Right cardiac atrium (tissue), 5 donors: ENCODE measurements at regions of chr11 and their contacts with region 1.

Region 1: GRCh38 chr11:10735481-10736475 is 15.3 kb upstream of the CTR9 start:
- DNase-seq: peak; percentile 95 to 98 (median 98)
- ATAC-seq: peak; percentile 99
- H3K4me3 ChIP-seq: no peak overlapping the region
- H3K27ac ChIP-seq: peak overlapping the region; percentile 70
- H3K4me1 ChIP-seq: no peaks in the 10 kb centered on the region
- H3K27me3 ChIP-seq: no peaks in the 10 kb centered on the region

Region 2: DNA sequence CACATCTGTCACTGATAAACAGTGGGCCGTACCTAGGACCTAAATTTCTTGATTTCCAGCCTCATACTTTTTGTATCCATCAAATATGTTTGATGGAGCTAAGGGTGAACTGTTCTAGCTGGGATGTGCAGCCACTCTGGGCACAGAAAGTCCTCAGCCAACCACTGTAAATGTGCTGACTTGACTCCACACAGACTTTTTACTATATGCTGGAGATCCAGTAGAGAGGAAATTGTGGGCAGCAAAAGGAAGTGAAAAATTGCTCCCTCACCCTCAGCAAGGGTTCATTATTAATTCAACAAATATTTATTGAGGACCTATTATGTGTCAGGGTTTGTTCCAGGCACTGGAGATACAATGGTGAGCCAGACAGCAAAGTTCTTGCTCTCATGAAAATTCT is 334.9 kb before region 1 on chr11:
- intact Hi-C with region 1: loop called (anchors 2 to 5 kb)
- DNase-seq: no peak
- ATAC-seq: peak; percentile 14 to 49
- H3K4me3 ChIP-seq: no peak overlapping the region
- H3K27ac ChIP-seq: no peak overlapping the region
- H3K4me1 ChIP-seq: peaks cover 4% of the 10 kb centered on the region
- H3K27me3 ChIP-seq: no peaks in the 10 kb centered on the region

Region 3: GRCh38 chr11:10405855-10406592 is 329.8 kb before region 1 on chr11:
- intact Hi-C with region 1: loop called (anchors 2 to 5 kb)
- DNase-seq: peak in 2 of 3 donors; percentile 70 to 74
- ATAC-seq: peak; percentile 86 to 89
- H3K4me3 ChIP-seq: no peak overlapping the region
- H3K27ac ChIP-seq: no peak overlapping the region
- H3K4me1 ChIP-seq: peaks cover 7% of the 10 kb centered on the region
- H3K27me3 ChIP-seq: no peaks in the 10 kb centered on the region

Region 4: DNA sequence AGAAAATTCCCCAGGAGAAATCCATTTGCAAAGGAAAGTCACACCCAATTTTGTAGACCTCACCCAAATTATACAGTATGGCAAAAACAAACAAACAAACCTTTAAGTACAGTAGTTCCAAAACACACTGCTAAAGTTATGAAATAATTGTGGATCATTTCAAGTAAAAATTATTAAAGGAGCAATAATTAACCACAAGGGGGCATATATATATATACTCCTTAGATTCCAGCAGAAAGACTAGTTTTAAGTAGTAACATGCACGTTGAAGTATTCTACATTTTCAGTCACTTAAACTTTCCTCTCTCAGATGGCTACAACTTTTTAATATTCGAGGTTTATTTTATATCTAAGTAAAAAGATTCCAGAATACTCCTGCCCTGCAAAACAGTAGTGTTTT is 221.6 kb before region 1 on chr11:
- intact Hi-C with region 1: loop called in 2 of 4 experiments (anchors 10 kb)
- DNase-seq: no peak
- ATAC-seq: no peak
- H3K4me3 ChIP-seq: no peak overlapping the region
- H3K27ac ChIP-seq: no peak overlapping the region
- H3K4me1 ChIP-seq: no peaks in the 10 kb centered on the region
- H3K27me3 ChIP-seq: no peaks in the 10 kb centered on the region

Region 5: DNA sequence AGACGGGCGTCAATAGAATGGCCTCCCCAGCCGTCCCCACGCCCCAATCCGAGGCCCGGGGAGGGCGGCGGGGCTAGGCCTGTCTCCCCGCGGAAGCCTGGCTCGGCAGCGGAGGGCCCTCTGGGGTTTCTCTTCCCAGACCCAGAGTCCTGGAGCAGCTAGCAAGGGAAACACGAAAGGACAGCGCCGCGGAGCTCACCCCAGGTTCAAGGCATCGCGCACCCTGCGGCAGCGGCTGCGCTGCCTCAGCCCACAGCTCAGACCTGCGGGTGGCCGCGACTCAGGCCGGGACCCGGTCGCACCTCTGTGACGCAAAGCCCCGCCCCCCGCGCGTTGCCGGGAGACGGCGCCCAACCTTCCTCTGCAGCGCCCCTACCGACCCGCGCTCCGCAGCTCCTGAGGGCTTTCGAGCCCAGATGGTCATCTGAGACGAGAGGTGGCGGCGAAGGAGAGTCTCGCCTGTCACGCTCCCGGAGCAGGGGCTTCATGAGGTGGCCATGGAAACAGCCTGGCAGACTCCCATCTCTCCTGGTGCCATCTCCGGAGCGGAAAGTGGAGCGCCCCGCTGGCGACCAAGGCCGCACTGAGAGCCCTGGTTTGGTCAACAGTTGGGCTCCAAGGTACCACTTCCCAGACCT is 194.7 kb before region 1 on chr11 and contains the start of gene RNF141:
- intact Hi-C with region 1: loop called in 1 of 4 experiments (anchors 10 kb)
- DNase-seq: peak; percentile 95 to 99 (median 98)
- ATAC-seq: peak; percentile 100
- H3K4me3 ChIP-seq: peak within 1 kb of the TSS; percentile 75
- H3K27ac ChIP-seq: peak within 1 kb of the TSS; percentile 79
- H3K4me1 ChIP-seq: no peaks in the 10 kb centered on the region
- H3K27me3 ChIP-seq: no peaks in the 10 kb centered on the region
- total RNA-seq, gene RNF141: 37.7 to 49.8 (median 41.4) TPM

Region 6: GRCh38 chr11:10623797-10624761 is 111.7 kb before region 1 on chr11:
- intact Hi-C with region 1: loop called in 1 of 4 experiments (anchors 5 kb)
- DNase-seq: peak in 2 of 3 donors; percentile 66 to 78
- ATAC-seq: peak in 1 of 2 donors; percentile 36
- H3K4me3 ChIP-seq: no peak overlapping the region
- H3K27ac ChIP-seq: no peak overlapping the region
- H3K4me1 ChIP-seq: peaks cover 2% of the 10 kb centered on the region
- H3K27me3 ChIP-seq: no peaks in the 10 kb centered on the region